Caco-2 (cell line): ENCODE measurements at regions of chr16 and their contacts with region 1.

Region 1: GRCh38 chr16:82738699-82739098 is 111.9 kb downstream of the CDH13 start:
- DNase-seq: peak in 1 of 2 experiments; percentile 8
- H3K4me3 ChIP-seq: no peak overlapping the region
- H3K4me3 Mint-ChIP-seq: no peak overlapping the region
- H3K27ac Mint-ChIP-seq: no peak overlapping the region
- H3K4me1 ChIP-seq: no peaks in the 10 kb centered on the region; the same call in 1 of the 2 replicates
- H3K4me1 Mint-ChIP-seq: no peaks in the 10 kb centered on the region
- H3K27me3 ChIP-seq: no peaks in the 10 kb centered on the region; the same call in 1 of the 2 replicates
- H3K27me3 Mint-ChIP-seq: peaks cover 20% of the 10 kb centered on the region
- CTCF ChIP-seq: peak; percentile 40 to 41

Region 2: GRCh38 chr16:82630688-82631087 is 108.0 kb before region 1 on chr16:
- CTCF ChIA-PET with region 1: interaction called, 3 read pairs
- POLR2A ChIA-PET with region 1: no interaction called
- intact Hi-C with region 1: loop called (anchors 1 kb)
- DNase-seq: no peak
- H3K4me3 ChIP-seq: no peak overlapping the region
- H3K4me3 Mint-ChIP-seq: no peak overlapping the region
- H3K27ac Mint-ChIP-seq: no peak overlapping the region
- H3K4me1 ChIP-seq: peaks cover 28% of the 10 kb centered on the region
- H3K4me1 Mint-ChIP-seq: peaks cover 30% of the 10 kb centered on the region
- H3K27me3 ChIP-seq: no peaks in the 10 kb centered on the region
- H3K27me3 Mint-ChIP-seq: peaks cover 8% of the 10 kb centered on the region
- CTCF ChIP-seq: peak; percentile 32 to 50

Region 3: DNA sequence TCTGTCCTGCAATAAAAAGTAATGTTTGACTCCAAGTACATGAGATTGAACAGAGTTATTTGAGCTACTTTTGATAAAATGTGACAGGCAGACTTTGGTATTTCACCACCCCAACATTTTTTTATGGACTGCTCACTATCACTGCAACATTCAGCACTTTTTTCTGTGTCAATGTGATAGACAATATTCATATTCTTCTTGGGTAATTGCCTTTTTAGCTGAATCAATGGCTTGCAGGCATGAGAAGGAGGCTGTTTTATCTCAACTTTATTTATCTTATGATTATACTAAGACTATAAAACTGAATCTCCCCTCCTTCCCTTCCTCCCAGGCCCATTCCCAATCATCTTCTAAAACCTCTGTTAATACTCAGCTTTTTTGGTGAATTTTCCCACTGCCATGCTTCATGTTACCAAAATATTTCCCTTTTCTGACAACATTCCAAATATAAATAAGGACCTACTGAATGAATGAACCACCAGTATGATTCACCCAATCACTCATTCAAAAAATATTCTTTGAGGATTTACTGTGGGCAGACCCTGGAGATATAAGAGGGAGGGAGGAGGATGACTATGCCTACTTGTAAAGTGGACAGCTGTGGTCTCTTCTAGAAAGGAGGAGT is 44.3 kb before region 1 on chr16:
- CTCF ChIA-PET with region 1: no interaction called
- POLR2A ChIA-PET with region 1: no interaction called
- intact Hi-C with region 1: no loop called
- DNase-seq: no peak
- H3K4me3 ChIP-seq: no peak overlapping the region
- H3K4me3 Mint-ChIP-seq: no peak overlapping the region
- H3K27ac Mint-ChIP-seq: no peak overlapping the region
- H3K4me1 ChIP-seq: peaks cover 12% of the 10 kb centered on the region; the same call in 1 of the 2 replicates
- H3K4me1 Mint-ChIP-seq: no peaks in the 10 kb centered on the region
- H3K27me3 ChIP-seq: no peaks in the 10 kb centered on the region
- H3K27me3 Mint-ChIP-seq: no peaks in the 10 kb centered on the region
- CTCF ChIP-seq: no peak

Region 4: DNA sequence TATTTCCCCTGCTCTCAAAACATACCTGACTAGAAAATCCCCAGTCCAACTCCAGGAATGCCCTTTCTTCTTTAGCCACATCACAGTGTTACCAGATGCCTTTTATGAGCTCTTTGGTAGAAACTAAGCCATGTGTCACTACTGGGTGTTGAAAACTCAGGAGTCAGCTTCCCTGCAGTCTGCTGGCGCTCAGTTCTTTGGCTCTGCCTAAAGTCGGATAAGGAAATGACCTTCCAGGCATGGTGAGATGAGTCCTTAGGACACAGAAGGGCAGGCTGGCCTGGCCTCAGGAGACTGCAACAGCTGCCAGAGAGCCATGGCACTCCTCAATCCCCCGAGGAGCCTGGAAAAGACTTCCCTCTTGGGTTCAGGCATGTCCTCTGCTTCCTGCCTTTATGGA is 22.9 kb before region 1 on chr16:
- CTCF ChIA-PET with region 1: interaction called, 14 read pairs
- POLR2A ChIA-PET with region 1: no interaction called
- intact Hi-C with region 1: no loop called
- DNase-seq: no peak
- H3K4me3 ChIP-seq: no peak overlapping the region
- H3K4me3 Mint-ChIP-seq: no peak overlapping the region
- H3K27ac Mint-ChIP-seq: no peak overlapping the region
- H3K4me1 ChIP-seq: no peaks in the 10 kb centered on the region
- H3K4me1 Mint-ChIP-seq: no peaks in the 10 kb centered on the region
- H3K27me3 ChIP-seq: no peaks in the 10 kb centered on the region
- H3K27me3 Mint-ChIP-seq: peaks cover 7% of the 10 kb centered on the region
- CTCF ChIP-seq: no peak

Region 5: DNA sequence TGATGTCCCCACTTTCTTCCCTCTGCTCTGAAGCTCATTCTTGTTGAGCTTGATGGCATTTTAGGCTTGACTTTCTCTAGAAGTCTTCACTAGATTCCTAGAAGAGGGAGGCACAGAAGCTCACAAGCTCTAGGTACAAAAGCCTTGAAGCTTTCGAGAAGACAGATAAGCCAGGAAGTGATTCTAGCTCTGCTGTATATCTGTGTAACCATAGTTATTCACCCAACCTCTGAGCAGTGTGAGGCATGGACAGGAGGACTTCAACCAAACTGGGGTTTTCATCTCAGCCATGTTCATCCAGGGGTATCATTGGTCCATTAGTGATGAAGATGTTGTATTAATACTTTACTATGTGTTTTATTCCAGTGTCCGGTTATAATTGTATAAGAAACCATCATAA is 187.8 kb after region 1 on chr16:
- CTCF ChIA-PET with region 1: no interaction called
- POLR2A ChIA-PET with region 1: no interaction called
- intact Hi-C with region 1: no loop called
- DNase-seq: no peak
- H3K4me3 ChIP-seq: no peak overlapping the region
- H3K4me3 Mint-ChIP-seq: no peak overlapping the region
- H3K27ac Mint-ChIP-seq: no peak overlapping the region
- H3K4me1 ChIP-seq: no peaks in the 10 kb centered on the region
- H3K4me1 Mint-ChIP-seq: no peaks in the 10 kb centered on the region
- H3K27me3 ChIP-seq: no peaks in the 10 kb centered on the region
- H3K27me3 Mint-ChIP-seq: peaks cover 8% of the 10 kb centered on the region
- CTCF ChIP-seq: no peak